ENCODE measurements at regions of chr19 and their contacts with region 1.

Region 1: GRCh38 chr19:44954824-44955586 is at the start of gene CLPTM1:
- DNase-seq: peak; percentile 85 to 96 (median 94)
- ATAC-seq: peak; percentile 97
- H3K4me3 ChIP-seq: peak within 1 kb of the TSS; percentile 92
- H3K4me3 Mint-ChIP-seq: peak within 1 kb of the TSS; percentile 90 to 99 (median 98)
- H3K27ac ChIP-seq: peak within 1 kb of the TSS; percentile 92
- H3K27ac Mint-ChIP-seq: peak within 1 kb of the TSS; percentile 97 to 99 (median 98)
- H3K4me1 ChIP-seq: peaks cover 12 to 24% of the 10 kb centered on the region in 2 donors
- H3K4me1 Mint-ChIP-seq: peaks cover 27 to 63% (median 56%) of the 10 kb centered on the region in 7 donors
- H3K27me3 ChIP-seq: no peaks in the 10 kb centered on the region
- H3K27me3 Mint-ChIP-seq: no peaks in the 10 kb centered on the region
- total RNA-seq, gene CLPTM1: 68.4 to 83.3 (median 76.8) TPM

Region 2: GRCh38 chr19:44653977-44654774 is 300.8 kb before region 1 on chr19:
- CTCF ChIA-PET with region 1: no interaction called
- POLR2A ChIA-PET with region 1: no interaction called
- intact Hi-C with region 1: loop called in 1 of 2 experiments (anchors 1 kb)
- DNase-seq: peak; percentile 39 to 72 (median 58)
- ATAC-seq: peak; percentile 98
- H3K4me3 ChIP-seq: no peak overlapping the region
- H3K4me3 Mint-ChIP-seq: no peak overlapping the region
- H3K27ac ChIP-seq: no peak overlapping the region
- H3K27ac Mint-ChIP-seq: peak overlapping the region in 1 of 9 donors; percentile 27
- H3K4me1 ChIP-seq: peaks cover 0 to 4% of the 10 kb centered on the region in 2 donors
- H3K4me1 Mint-ChIP-seq: peaks cover 6 to 13% (median 10%) of the 10 kb centered on the region in 7 donors
- H3K27me3 ChIP-seq: no peaks in the 10 kb centered on the region
- H3K27me3 Mint-ChIP-seq: no peaks in the 10 kb centered on the region

Region 3: GRCh38 chr19:44782729-44783128 is 172.3 kb before region 1 on chr19:
- CTCF ChIA-PET with region 1: no interaction called
- POLR2A ChIA-PET with region 1: no interaction called
- intact Hi-C with region 1: loop called (anchors 1 kb)
- DNase-seq: no peak
- ATAC-seq: no peak
- H3K4me3 ChIP-seq: no peak overlapping the region
- H3K4me3 Mint-ChIP-seq: no peak overlapping the region
- H3K27ac ChIP-seq: no peak overlapping the region
- H3K27ac Mint-ChIP-seq: no peak overlapping the region
- H3K4me1 ChIP-seq: no peaks in the 10 kb centered on the region
- H3K4me1 Mint-ChIP-seq: peaks cover 0 to 7% (median 6%) of the 10 kb centered on the region in 7 donors
- H3K27me3 ChIP-seq: no peaks in the 10 kb centered on the region
- H3K27me3 Mint-ChIP-seq: peaks cover 0 to 4% (median 0%) of the 10 kb centered on the region in 5 donors

Region 4: DNA sequence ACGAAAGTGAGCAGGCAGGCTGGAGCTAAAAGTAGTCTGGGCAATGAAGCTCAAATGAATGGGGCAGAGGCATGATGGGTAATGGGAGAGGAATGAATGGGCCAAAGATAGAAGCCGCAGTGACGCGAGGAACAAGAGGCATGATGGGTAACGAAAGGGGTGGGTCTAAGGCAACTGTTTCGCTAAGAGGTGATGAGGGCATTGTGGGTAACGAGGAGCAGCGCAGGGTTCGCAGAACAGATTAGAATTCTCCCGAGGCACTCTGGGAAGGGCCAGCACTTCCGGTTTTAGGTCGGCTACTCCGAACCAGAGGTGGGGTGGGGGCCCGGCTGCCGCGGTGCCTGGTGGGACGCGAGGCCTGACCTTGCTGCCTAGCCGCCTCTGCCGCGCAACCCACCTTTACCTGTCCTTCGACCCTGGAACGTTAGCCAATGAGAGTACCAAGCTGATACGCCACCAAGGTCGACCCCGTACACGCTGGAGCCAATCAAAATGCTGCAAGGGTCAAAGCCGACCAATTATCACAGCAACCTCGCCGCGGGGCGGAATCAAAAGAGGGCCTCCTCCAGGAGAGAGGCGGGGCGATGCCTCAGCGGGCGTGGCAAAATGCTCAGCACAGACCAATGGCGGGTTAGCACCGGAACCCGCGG is 64.5 kb before region 1 on chr19:
- CTCF ChIA-PET with region 1: no interaction called
- POLR2A ChIA-PET with region 1: interaction called, 12 read pairs
- intact Hi-C with region 1: loop called (anchors 1 kb)
- DNase-seq: peak; percentile 97 to 100 (median 100)
- ATAC-seq: peak; percentile 86
- H3K4me3 ChIP-seq: peak overlapping the region; percentile 69
- H3K4me3 Mint-ChIP-seq: peak overlapping the region; percentile 83 to 93 (median 89)
- H3K27ac ChIP-seq: peak overlapping the region; percentile 84
- H3K27ac Mint-ChIP-seq: peak overlapping the region; percentile 90 to 96 (median 94)
- H3K4me1 ChIP-seq: peaks cover 10 to 20% of the 10 kb centered on the region in 2 donors
- H3K4me1 Mint-ChIP-seq: peaks cover 18 to 44% (median 35%) of the 10 kb centered on the region in 7 donors
- H3K27me3 ChIP-seq: no peaks in the 10 kb centered on the region
- H3K27me3 Mint-ChIP-seq: no peaks in the 10 kb centered on the region

Region 5: GRCh38 chr19:44912854-44913253 is 42.2 kb before region 1 on chr19:
- CTCF ChIA-PET with region 1: no interaction called
- POLR2A ChIA-PET with region 1: no interaction called
- intact Hi-C with region 1: loop called in 1 of 2 experiments (anchors 2 kb)
- DNase-seq: no peak
- ATAC-seq: no peak
- H3K4me3 ChIP-seq: no peak overlapping the region
- H3K4me3 Mint-ChIP-seq: peak overlapping the region in 2 of 10 donors; percentile 9 to 51
- H3K27ac ChIP-seq: no peak overlapping the region
- H3K27ac Mint-ChIP-seq: no peak overlapping the region
- H3K4me1 ChIP-seq: no peaks in the 10 kb centered on the region
- H3K4me1 Mint-ChIP-seq: peaks cover 4 to 19% (median 7%) of the 10 kb centered on the region in 7 donors
- H3K27me3 ChIP-seq: no peaks in the 10 kb centered on the region
- H3K27me3 Mint-ChIP-seq: peaks cover 26 to 36% (median 32%) of the 10 kb centered on the region in 5 donors

Region 6: DNA sequence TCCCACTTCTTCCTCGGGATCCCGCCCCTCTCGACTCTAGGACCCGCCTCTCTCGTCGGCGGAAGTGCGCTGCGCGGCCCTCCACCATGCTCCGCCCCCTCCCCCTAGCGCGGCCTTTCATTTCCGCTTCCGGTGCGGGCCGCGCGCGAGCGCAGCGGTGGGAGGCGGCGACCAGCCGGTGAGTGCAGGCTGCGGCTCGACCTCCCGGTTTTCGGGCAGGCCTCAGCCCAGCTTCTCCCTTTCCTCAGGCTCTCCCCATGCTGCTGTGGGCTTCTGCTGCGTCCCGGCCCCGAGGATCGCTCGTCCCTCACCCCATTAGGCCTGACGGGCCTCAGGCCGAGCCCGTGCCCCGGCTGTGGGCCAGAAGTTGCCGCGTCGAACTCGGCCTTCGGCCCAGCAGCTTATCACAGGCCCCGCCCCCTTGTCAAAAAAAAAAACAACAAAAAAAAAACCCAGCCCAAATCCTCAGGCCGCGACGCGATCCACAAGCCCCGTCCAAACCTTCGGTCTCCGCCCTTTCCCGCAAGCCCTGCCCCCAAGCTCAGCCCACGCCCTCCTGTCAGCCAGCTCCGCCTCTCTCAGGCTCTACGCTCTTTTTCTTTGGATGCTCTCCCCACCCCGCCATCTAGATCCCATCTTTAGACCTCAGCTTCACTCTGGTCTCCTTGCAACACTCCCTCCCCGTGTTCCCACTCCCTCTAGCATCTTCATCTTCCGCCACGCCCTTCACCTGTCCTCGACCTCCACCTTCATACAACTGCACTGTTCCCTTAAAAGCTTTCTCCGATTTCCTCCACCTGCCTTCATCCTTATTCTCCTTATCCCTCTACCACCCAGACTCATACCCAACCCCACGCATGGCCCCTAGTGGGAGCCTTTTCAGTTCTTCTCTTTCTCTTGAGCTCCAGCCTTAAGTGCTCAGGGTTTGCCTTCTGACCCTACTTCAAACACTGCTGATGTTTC is 84.2 kb after region 1 on chr19 and contains the start of gene CLASRP:
- CTCF ChIA-PET with region 1: no interaction called
- POLR2A ChIA-PET with region 1: interaction called, 3 read pairs
- intact Hi-C with region 1: loop called (anchors 1 kb)
- DNase-seq: peak; percentile 73 to 92 (median 85)
- ATAC-seq: peak; percentile 96
- H3K4me3 ChIP-seq: peak within 1 kb of the TSS; percentile 85
- H3K4me3 Mint-ChIP-seq: peak within 1 kb of the TSS; percentile 89 to 100 (median 99)
- H3K27ac ChIP-seq: peak within 1 kb of the TSS; percentile 100
- H3K27ac Mint-ChIP-seq: peak within 1 kb of the TSS; percentile 90 to 99 (median 98)
- H3K4me1 ChIP-seq: peaks cover 15 to 24% of the 10 kb centered on the region in 2 donors
- H3K4me1 Mint-ChIP-seq: peaks cover 26 to 43% (median 33%) of the 10 kb centered on the region in 7 donors
- H3K27me3 ChIP-seq: no peaks in the 10 kb centered on the region
- H3K27me3 Mint-ChIP-seq: no peaks in the 10 kb centered on the region
- total RNA-seq, gene CLASRP: 94.7 to 185 (median 163) TPM

Region 7: DNA sequence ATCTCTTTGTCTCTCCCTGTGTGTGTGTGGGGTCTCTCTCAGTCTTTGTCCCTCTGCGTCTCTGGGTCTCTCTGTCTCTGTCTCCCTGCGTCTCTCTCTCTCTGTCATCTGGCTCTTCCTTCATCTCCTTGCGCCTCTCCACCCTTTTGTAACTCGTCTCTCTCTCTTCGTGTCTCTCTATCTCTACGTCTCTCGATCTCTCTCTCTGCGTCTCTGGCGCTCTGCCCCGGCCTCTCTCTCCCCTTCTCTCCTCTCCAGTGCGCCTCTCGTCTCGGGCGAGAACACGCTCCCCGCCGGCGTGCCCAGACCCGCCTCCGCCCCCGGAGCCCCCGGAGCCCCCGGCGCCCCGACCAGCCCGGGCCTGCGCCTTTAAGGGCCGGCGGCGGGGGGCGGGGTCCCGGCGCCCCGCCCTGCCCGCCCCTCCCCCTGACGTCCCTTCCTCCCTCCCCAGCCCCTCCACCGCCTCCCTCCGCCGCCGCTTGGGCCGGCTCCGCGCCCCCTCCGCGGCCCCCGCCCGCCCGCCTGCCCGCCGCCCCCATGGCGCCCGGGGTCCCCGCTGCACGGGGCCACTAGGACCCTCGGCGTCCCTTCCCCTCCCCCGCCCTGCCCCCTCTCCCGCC is 295.9 kb after region 1 on chr19 and contains the start of gene MARK4:
- CTCF ChIA-PET with region 1: no interaction called
- POLR2A ChIA-PET with region 1: no interaction called
- intact Hi-C with region 1: loop called in 1 of 2 experiments (anchors 1 kb)
- DNase-seq: peak in 8 of 9 donors; percentile 32 to 70 (median 51)
- ATAC-seq: peak; percentile 80
- H3K4me3 ChIP-seq: peak within 1 kb of the TSS; percentile 63
- H3K4me3 Mint-ChIP-seq: peak within 1 kb of the TSS; percentile 87 to 96 (median 94)
- H3K27ac ChIP-seq: peak within 1 kb of the TSS; percentile 72
- H3K27ac Mint-ChIP-seq: peak within 1 kb of the TSS; percentile 28 to 90 (median 81)
- H3K4me1 ChIP-seq: peaks cover 19 to 20% of the 10 kb centered on the region in 2 donors
- H3K4me1 Mint-ChIP-seq: peaks cover 23 to 42% (median 35%) of the 10 kb centered on the region in 7 donors
- H3K27me3 ChIP-seq: no peaks in the 10 kb centered on the region
- H3K27me3 Mint-ChIP-seq: peaks cover 0 to 5% (median 0%) of the 10 kb centered on the region in 5 donors
- total RNA-seq, gene MARK4: 22.4 to 39.2 (median 25.5) TPM

Measured in naive thymus-derived CD4-positive, alpha-beta T cell (primary cell).